KBM-7 (cell line): ENCODE measurements at regions of chr7 and their contacts with region 1.

Region 1: GRCh38 chr7:28921822-28922221 is 36.3 kb downstream of the TRIL start:
- DNase-seq: peak; percentile 63

Region 2: DNA sequence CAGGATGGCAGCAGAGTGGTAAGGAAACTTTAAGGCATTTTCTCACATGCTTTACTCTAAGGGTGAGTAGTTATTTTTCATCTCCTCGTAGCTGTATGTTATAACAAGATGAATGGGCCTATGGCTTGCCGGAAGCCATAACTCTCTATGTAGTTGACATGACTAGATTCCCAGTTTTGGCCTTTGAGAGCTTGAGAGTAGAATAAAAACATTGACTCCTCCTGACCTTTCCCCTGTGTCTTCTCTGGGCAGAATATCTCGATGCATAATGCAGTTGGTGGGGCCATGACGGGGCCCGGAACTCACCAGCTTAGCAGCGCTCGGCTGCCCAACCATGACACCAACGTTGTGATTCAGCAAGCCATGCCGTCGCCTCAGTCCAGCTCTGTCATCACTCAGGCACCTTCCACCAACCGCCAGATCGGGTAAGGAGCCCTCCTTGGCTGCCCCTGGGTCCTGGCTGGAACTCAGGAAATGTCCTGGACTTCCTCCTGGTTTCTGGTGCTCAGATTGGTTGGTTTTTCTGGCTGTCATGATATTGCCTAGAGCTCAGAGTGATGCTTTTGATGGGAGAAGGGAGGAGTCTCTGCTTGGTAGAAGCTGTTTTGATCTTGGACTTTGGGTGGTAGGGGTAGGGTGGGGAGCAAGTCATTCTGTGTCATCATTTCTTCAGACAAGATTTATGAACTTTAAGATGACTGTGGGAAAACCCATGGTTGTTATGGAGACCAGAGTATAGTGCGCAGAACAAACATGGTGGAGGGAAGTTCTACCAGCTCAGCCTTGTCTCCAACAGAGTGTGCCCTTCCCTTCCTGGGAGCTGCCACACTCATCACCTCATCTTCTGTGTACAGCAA is 351.5 kb before region 1 on chr7:
- in situ Hi-C with region 1: no loop called
- DNase-seq: no peak

Region 3: GRCh38 chr7:29408841-29409243 is 487.0 kb after region 1 on chr7:
- in situ Hi-C with region 1: loop called (anchors 25 kb)
- DNase-seq: peak; percentile 65